ENCODE measurements at regions of chr5 and their contacts with region 1.

Region 1: DNA sequence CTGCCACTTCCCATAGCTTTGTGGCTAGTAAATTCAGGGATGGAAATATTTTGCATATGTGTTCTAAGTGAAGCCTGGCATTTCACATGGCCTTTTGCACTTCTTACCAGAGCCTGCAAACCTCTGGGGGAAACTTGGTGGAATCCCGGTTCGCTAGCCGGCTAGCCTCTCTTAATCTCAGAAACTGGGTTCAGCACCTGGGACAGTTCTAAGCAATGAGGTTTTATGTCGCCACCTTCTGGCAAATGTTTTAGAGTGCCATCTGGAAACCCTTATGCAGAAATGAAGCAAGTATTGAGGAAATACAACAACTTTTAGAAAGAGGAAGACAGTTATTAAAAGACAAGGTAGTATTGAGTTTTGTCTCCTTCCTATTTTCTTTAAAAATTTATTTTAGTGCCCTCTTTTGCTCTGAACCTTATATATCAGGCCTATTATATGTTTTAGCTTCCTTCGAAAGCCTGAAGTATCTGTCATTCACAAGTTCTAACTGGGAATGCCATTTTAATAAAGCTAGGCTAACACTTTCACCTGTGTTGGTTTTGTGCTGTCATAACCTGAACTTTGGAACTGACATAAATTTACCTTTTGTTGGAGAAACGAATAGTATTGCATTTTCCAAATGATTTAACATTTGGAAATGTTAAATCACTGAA is 963 bp upstream of the HTR1A start:
- DNase-seq: peak; percentile 15 to 43
- H3K4me3 ChIP-seq: no peak overlapping the region
- H3K27ac ChIP-seq: no peak overlapping the region
- H3K4me1 ChIP-seq: no peaks in the 10 kb centered on the region
- H3K27me3 ChIP-seq: no peaks in the 10 kb centered on the region
- CTCF ChIP-seq: peak; percentile 69

Region 2: DNA sequence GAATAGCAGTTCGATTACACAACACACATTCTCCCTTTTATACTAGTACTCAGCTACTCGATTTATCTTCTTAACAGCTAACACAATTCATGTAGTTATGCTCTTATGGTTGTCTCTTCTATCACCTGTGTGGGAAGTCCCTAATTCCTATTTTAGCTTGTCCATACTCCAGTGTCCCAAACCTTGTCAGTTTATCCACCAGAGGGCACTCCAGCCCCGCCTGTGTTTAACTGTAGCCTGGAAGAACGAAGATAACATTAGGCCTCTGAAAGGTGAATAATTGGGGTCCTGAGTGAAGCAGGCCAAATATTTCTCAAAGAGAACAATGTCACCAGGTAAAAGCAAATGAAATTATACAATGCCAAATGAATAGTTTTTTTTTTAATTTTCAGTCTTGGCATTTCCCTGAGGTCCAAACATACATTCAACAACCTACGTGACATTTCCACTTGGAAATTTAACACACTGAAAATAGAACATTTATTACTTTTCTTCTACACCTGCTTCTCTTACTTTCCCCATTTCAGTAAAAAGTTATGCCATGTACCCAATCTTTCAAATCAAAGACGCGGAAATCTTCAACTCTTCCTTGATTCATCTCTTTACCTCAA is 561.7 kb before region 1 on chr5:
- CTCF ChIA-PET with region 1: no interaction called
- POLR2A ChIA-PET with region 1: no interaction called
- intact Hi-C with region 1: loop called (anchors 1 kb)
- DNase-seq: peak in 1 of 2 experiments; percentile 49
- H3K4me3 ChIP-seq: no peak overlapping the region
- H3K27ac ChIP-seq: no peak overlapping the region
- H3K4me1 ChIP-seq: no peaks in the 10 kb centered on the region
- H3K27me3 ChIP-seq: no peaks in the 10 kb centered on the region
- CTCF ChIP-seq: peak; percentile 79

Region 3: DNA sequence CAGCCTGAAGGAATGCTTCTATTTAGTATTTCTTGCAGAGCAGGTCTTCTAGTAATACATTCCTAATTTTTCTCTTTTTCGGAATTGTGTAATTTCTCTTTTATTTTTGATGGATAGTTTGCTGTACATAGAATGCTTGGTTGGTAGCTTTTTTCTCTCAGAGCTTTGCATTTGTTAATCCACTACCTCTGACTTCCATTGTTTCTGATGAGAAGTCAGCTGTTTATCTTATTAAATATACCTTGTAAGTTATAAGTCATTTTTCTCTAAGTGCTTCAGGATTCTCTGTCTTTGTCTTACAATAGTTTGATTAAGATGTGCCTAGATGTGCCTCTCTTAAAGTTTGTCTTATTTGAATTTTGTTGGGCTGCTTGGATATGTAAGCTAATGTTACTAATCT is 102.8 kb before region 1 on chr5:
- CTCF ChIA-PET with region 1: no interaction called
- POLR2A ChIA-PET with region 1: no interaction called
- intact Hi-C with region 1: no loop called
- DNase-seq: no peak
- H3K4me3 ChIP-seq: no peak overlapping the region
- H3K27ac ChIP-seq: no peak overlapping the region
- H3K4me1 ChIP-seq: no peaks in the 10 kb centered on the region
- H3K27me3 ChIP-seq: no peaks in the 10 kb centered on the region
- CTCF ChIP-seq: no peak

Measured in PC-9 (cell line).